ENCODE measurements at regions of chr7 and their contacts with region 1.

Region 1: GRCh38 chr7:43582503-43583423 is at the start of gene STK17A:
- DNase-seq: peak; percentile 95
- H3K4me3 Mint-ChIP-seq: peak within 1 kb of the TSS; percentile 86
- H3K27ac Mint-ChIP-seq: peak within 1 kb of the TSS; percentile 93
- H3K4me1 Mint-ChIP-seq: peaks cover 20% of the 10 kb centered on the region
- H3K27me3 Mint-ChIP-seq: peaks cover 7% of the 10 kb centered on the region
- total RNA-seq, gene STK17A: 48.9 to 52.8 TPM

Region 2: DNA sequence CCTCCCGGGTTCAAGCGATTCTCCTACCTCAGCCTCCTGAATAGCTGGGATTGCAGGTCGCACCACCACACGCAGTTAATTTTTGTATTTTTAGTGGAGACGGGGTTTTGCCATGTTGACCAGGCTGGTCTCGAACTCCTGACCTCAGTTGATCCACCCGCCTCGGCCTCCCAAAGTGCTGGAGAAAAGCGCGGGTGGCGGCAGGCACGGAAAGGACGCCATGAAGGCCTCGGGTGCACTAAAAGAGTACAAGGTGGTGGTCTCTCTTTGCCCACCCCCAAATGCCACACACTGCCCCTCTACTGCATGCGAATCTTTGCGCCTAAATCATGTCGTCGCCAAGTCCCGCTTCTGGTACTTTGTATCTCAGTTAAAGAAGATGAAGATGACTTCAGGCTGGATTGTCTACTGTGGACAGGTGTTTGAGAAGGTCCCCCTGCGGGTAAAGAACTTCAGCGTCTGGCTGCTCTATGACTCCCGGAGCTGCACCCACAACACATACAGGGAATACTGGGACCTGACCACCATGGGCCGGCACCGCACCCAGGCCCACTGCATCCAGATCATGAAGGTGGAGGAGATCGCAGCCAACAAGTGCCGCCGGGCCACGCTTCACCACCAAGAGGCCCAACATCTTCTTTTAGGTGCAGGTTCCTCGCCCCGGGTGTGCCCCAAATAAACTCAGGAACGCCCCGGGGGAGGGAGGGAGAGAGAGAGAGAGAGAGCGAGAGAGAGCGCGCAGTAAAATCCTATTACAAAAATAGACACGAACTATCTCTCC is 308.6 kb before region 1 on chr7:
- CTCF ChIA-PET with region 1: no interaction called
- intact Hi-C with region 1: no loop called
- DNase-seq: no peak
- H3K4me3 Mint-ChIP-seq: no peak overlapping the region
- H3K27ac Mint-ChIP-seq: no peak overlapping the region
- H3K4me1 Mint-ChIP-seq: no peaks in the 10 kb centered on the region
- H3K27me3 Mint-ChIP-seq: peaks cover 10% of the 10 kb centered on the region

Region 3: DNA sequence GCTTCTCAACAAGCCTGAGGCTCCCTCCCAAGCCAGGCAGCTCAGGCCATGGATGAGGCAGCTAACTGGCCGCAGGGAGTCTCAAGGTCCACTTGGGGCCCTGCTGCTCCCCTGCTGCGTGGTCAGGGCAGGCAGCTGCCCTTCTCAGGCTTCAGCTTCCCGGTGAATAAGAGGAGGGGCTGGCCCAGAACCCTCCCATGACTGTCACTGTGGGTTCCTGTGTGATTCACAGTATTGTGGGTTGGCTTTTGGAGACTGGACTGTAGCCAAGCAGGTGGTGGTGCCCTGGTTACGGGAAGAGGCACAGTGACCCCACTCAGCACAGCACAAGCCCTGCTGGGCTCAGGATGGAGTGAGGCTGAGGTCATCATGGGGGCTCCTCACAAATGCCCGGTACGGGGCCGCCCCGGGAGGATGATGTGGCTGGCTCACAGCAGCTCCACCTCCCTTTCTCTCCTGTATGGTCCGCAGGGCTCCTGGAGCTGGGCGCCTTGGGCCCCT is 280.5 kb before region 1 on chr7:
- CTCF ChIA-PET with region 1: interaction called, 3 read pairs
- intact Hi-C with region 1: loop called (anchors 10 kb)
- DNase-seq: peak; percentile 73
- H3K4me3 Mint-ChIP-seq: no peak overlapping the region
- H3K27ac Mint-ChIP-seq: no peak overlapping the region
- H3K4me1 Mint-ChIP-seq: peaks cover 36% of the 10 kb centered on the region
- H3K27me3 Mint-ChIP-seq: no peaks in the 10 kb centered on the region

Region 4: GRCh38 chr7:43625980-43626379 is 43.2 kb after region 1 on chr7:
- CTCF ChIA-PET with region 1: interaction called, 48 read pairs
- intact Hi-C with region 1: loop called (anchors 1 kb)
- DNase-seq: no peak
- H3K4me3 Mint-ChIP-seq: no peak overlapping the region
- H3K27ac Mint-ChIP-seq: peak overlapping the region; percentile 66
- H3K4me1 Mint-ChIP-seq: peaks cover 90% of the 10 kb centered on the region
- H3K27me3 Mint-ChIP-seq: no peaks in the 10 kb centered on the region

Region 5: GRCh38 chr7:43669286-43670081 is 86.7 kb after region 1 on chr7:
- CTCF ChIA-PET with region 1: interaction called, 29 read pairs
- intact Hi-C with region 1: loop called (anchors 1 kb)
- DNase-seq: peak; percentile 90
- H3K4me3 Mint-ChIP-seq: peak overlapping the region; percentile 71
- H3K27ac Mint-ChIP-seq: peak overlapping the region; percentile 96
- H3K4me1 Mint-ChIP-seq: peaks cover 87% of the 10 kb centered on the region
- H3K27me3 Mint-ChIP-seq: no peaks in the 10 kb centered on the region

Region 6: GRCh38 chr7:43700059-43700501 is 117.3 kb after region 1 on chr7:
- CTCF ChIA-PET with region 1: interaction called, 388 read pairs
- intact Hi-C with region 1: loop called (anchors 1 kb)
- DNase-seq: no peak
- H3K4me3 Mint-ChIP-seq: no peak overlapping the region
- H3K27ac Mint-ChIP-seq: no peak overlapping the region
- H3K4me1 Mint-ChIP-seq: peaks cover 40% of the 10 kb centered on the region
- H3K27me3 Mint-ChIP-seq: no peaks in the 10 kb centered on the region

Region 7: DNA sequence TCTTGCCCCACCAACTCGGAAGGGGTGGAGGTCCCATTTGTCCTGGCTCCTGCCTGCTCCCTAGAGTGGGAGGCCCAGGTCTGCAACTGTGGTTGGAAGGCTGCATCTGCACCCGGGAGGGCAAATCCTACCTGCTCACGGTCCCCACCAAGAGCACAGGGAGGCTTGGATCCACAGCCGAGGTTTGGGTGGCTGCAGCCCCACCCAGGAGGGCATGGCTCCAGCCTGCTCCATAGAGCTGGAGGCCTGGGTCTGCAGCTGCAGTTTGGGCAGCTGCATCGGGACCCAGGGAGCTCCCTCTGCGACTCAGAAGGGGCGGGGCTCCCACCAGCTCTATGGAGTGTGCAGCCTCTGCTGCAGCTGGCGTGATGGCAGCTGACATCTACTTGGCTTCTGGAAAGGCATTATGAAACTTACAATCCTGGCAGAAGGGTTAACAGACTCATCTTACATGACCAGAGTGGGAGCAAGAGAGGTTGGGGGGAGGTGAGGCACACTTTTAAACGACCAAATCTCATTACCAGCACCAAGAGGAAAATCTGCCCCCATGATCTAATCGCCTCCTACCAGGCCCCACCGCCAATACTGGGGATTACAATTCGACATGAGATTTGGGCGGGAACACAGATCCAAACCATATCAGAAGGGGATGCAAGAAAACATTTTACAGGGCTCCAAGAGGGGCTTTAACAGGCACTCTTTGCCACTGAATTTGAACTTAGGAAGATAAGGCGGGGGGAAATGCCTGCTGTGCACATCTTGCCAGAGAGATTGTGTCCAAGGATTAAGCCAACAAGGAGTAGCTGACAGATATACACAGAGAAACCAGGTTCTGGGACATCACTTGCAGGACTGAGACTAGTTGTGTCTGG is 167.5 kb after region 1 on chr7:
- CTCF ChIA-PET with region 1: interaction called, 11 read pairs
- intact Hi-C with region 1: no loop called
- DNase-seq: no peak
- H3K4me3 Mint-ChIP-seq: no peak overlapping the region
- H3K27ac Mint-ChIP-seq: no peak overlapping the region
- H3K4me1 Mint-ChIP-seq: peaks cover 16% of the 10 kb centered on the region
- H3K27me3 Mint-ChIP-seq: no peaks in the 10 kb centered on the region

Region 8: DNA sequence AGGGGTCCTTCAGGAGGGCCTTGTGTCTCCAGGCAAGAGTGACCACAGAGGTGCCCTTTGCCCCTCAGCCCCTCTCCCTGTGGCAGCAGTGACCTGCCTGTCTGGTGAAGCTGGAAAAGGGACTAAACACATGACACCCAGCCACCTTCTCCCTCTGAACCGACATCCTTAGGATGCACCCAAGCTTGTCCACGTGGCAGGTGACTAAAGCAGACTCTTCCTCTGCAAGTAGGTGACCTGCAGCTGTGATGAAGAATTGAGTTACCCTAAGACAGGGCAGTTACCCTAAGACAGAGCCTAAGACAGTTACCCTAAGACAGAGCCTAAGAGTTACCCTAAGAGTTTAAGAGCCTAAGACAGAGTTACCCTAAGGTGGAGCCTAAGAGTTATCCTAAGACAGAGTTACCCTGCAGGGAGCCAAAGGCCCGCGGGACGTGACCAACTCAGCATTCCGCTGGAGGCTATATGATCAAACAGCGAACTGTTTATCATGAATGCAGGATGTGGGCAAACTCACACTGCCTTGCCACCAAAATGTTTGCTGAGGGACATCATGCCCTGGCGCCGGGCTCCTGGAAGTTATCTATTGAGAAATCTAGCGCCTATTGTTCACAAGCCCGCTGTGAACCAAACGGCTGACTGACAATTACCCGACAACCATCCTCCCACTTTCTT is 225.5 kb after region 1 on chr7:
- CTCF ChIA-PET with region 1: interaction called, 6 read pairs
- intact Hi-C with region 1: loop called (anchors 2 kb)
- DNase-seq: no peak
- H3K4me3 Mint-ChIP-seq: no peak overlapping the region
- H3K27ac Mint-ChIP-seq: no peak overlapping the region
- H3K4me1 Mint-ChIP-seq: no peaks in the 10 kb centered on the region
- H3K27me3 Mint-ChIP-seq: peaks cover 4% of the 10 kb centered on the region

Region 9: DNA sequence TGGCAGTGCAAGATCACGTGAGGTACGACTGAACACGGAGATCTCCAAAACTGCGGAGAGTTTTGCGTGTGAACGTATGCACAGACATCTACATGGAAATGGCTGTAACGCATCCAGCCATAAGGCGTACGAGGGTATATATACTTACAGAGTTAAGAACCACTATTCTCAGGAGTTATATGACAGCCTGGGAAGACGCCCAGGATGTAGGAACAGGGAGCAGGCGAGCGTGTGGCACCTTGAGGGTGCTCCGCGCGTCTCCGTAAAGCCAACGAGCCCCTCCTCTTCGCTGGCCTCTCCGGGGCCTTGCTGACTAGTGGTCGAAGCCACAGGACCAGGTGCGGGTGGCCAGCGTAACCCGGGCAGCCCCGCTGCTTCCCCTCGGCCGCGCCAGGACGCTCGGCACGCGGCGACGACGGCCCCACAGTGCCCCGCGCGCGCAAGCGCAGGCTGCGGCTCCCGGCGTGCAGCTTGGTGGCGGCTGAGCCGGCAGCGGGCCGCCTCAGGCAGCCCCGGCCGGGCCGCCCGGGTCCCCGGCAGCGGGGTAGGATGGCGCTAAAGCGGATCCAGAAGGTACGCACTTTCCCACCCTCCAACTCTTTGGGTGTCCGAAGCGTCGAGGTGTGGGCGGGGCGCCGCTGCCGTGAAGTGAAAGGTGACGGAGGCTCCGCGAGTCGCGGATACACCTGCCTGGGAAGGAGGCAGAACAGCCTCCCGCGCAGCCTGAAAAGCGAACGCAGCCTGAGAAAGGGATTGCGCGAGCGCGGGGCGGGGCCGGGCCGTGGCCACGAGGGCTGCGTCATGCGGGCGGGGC is 343.4 kb after region 1 on chr7 and contains the start of gene UBE2D4:
- CTCF ChIA-PET with region 1: no interaction called
- intact Hi-C with region 1: no loop called
- DNase-seq: peak; percentile 91
- H3K4me3 Mint-ChIP-seq: peak within 1 kb of the TSS; percentile 90
- H3K27ac Mint-ChIP-seq: peak within 1 kb of the TSS; percentile 88
- H3K4me1 Mint-ChIP-seq: peaks cover 33% of the 10 kb centered on the region
- H3K27me3 Mint-ChIP-seq: no peaks in the 10 kb centered on the region
- total RNA-seq, gene UBE2D4: 11.4 to 12.8 TPM

Measured in activated naive CD4-positive, alpha-beta T cell treated with anti-CD3 and anti-CD28 coated beads for 36 hours (primary cell).